HCT116 (cell line): ENCODE measurements at regions of chr13 and their contacts with region 1.

Region 1: GRCh38 chr13:51797664-51798488 is 6.1 kb downstream of the DHRS12 start:
- DNase-seq: peak; percentile 66
- ATAC-seq: peak; percentile 81
- H3K4me3 ChIP-seq: no peak overlapping the region
- H3K27ac ChIP-seq: no peak overlapping the region
- H3K4me1 ChIP-seq: peaks cover 25 to 30% of the 10 kb centered on the region in 2 experiments
- H3K27me3 ChIP-seq: no peaks in the 10 kb centered on the region
- CTCF ChIP-seq: peak in 2 of 3 experiments; percentile 64 to 70; a peak in 4 of 6 replicates
- POLR2A ChIP-seq: no peak
- RAD21 ChIP-seq: no peak

Region 2: GRCh38 chr13:50222569-50223332 is 1575.1 kb before region 1 on chr13:
- CTCF ChIA-PET with region 1: no interaction called
- POLR2A ChIA-PET with region 1: no interaction called
- RAD21 ChIA-PET with region 1: no interaction called
- intact Hi-C with region 1: no loop called
- DNase-seq: no peak
- ATAC-seq: no peak
- H3K4me3 ChIP-seq: no peak overlapping the region
- H3K27ac ChIP-seq: no peak overlapping the region
- H3K4me1 ChIP-seq: no peaks in the 10 kb centered on the region
- H3K27me3 ChIP-seq: no peaks in the 10 kb centered on the region
- CTCF ChIP-seq: no peak
- POLR2A ChIP-seq: no peak
- RAD21 ChIP-seq: no peak

Region 3: DNA sequence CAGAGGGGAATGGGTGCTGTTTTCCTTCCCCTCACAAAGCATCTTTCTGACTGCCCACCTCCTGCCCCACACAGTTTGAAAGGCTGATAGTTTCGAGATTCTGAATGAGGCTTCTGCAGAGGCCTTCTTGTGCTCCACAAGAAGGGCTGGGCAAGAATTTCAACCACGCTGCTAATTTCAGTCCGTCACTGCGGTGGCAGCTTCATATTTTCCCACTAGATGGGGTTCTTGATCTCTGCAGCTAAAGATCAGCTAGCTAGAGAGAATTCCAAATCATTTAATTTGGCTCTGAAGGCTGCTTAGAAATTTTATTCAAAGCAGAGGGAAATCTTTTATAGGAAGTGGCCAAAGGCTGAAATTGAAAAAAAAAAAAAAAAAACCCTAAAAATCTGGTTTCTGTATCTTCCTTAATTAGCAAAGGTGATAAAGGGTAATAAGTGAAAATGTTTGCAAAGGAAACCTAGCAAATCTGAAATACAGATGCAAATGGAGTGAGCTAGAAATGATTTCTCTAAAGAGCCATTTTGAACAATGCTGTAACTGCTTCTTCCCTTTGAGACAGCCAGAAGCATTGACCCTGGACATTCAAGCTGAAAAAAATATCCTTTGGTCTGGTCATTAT is 648.8 kb before region 1 on chr13:
- CTCF ChIA-PET with region 1: interaction called, 41 read pairs
- POLR2A ChIA-PET with region 1: interaction called, 3 read pairs
- RAD21 ChIA-PET with region 1: interaction called in 1 of 2 experiments, 3 read pairs
- intact Hi-C with region 1: loop called (anchors 1 kb)
- DNase-seq: peak; percentile 34
- ATAC-seq: peak; percentile 83
- H3K4me3 ChIP-seq: no peak overlapping the region
- H3K27ac ChIP-seq: no peak overlapping the region
- H3K4me1 ChIP-seq: no peaks in the 10 kb centered on the region
- H3K27me3 ChIP-seq: peaks cover 24% of the 10 kb centered on the region; the same call in 1 of the 2 replicates
- CTCF ChIP-seq: peak; percentile 58 to 65 (median 60); a peak in 5 of 6 replicates
- POLR2A ChIP-seq: no peak
- RAD21 ChIP-seq: peak; percentile 82

Region 4: DNA sequence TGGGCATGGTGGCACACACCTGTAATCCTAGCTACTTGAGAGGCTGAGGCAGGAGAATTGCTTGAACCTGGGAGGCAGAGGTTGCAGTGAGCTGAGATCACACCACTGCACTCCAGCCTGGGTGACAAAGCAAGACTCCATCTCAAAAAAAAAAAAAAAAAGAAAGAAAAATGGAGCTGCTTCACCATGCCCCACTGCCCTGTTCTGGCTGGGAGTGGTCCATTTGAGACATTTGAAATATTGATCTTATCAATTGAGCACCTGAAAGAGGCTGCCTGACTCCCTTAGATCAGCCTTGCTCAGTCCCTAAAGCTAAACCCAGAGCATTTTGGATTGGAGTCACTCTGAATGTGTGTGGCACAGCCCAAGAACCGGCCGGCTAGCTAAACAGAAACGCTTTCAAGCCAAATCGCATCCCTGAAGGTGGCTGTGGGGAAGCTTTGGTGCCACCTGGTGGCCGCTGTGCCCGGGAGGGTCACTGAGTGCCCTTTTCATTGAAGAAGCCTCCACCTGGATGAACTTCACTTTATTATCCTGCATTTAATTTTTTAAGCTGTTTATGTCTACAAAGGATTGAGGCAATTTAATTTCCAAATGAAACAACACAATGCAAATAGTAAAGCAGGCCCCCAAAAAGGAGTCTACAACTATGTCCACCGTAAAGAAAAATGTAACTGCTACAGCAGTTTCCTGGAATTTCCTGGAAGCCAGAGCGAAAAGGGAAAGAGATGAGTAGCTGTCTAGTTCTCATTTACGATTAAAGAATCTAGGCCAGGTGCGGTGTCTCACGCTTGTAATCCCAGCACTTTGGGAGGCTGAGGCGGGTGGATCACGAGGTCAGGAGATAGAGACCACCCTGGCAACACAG is 511.5 kb before region 1 on chr13:
- CTCF ChIA-PET with region 1: interaction called, 26 read pairs
- POLR2A ChIA-PET with region 1: no interaction called
- RAD21 ChIA-PET with region 1: interaction called, 8 read pairs
- intact Hi-C with region 1: loop called (anchors 2 kb)
- DNase-seq: peak; percentile 36
- ATAC-seq: peak; percentile 95
- H3K4me3 ChIP-seq: no peak overlapping the region
- H3K27ac ChIP-seq: no peak overlapping the region
- H3K4me1 ChIP-seq: no peaks in the 10 kb centered on the region
- H3K27me3 ChIP-seq: no peaks in the 10 kb centered on the region
- CTCF ChIP-seq: peak; percentile 74 to 96 (median 96); a peak in 5 of 6 replicates
- POLR2A ChIP-seq: no peak
- RAD21 ChIP-seq: peak; percentile 84

Region 5: GRCh38 chr13:51444922-51445321 is 353.0 kb before region 1 on chr13:
- CTCF ChIA-PET with region 1: interaction called, 18 read pairs
- POLR2A ChIA-PET with region 1: interaction called, 3 read pairs
- RAD21 ChIA-PET with region 1: interaction called, 4 to 5 read pairs
- intact Hi-C with region 1: no loop called
- DNase-seq: peak; percentile 15
- ATAC-seq: no peak
- H3K4me3 ChIP-seq: no peak overlapping the region
- H3K27ac ChIP-seq: no peak overlapping the region
- H3K4me1 ChIP-seq: no peaks in the 10 kb centered on the region
- H3K27me3 ChIP-seq: no peaks in the 10 kb centered on the region
- CTCF ChIP-seq: peak; percentile 8 to 42 (median 36); a peak in 2 of 6 replicates
- POLR2A ChIP-seq: no peak
- RAD21 ChIP-seq: peak; percentile 57

Region 6: GRCh38 chr13:51583875-51584730 is 213.8 kb before region 1 on chr13 and contains the start of gene WDFY2:
- CTCF ChIA-PET with region 1: interaction called, 5 read pairs
- POLR2A ChIA-PET with region 1: no interaction called
- RAD21 ChIA-PET with region 1: no interaction called
- intact Hi-C with region 1: loop called (anchors 5 kb)
- DNase-seq: peak; percentile 99
- ATAC-seq: peak; percentile 84
- H3K4me3 ChIP-seq: peak within 1 kb of the TSS; percentile 75 to 89
- H3K27ac ChIP-seq: peak within 1 kb of the TSS; percentile 83
- H3K4me1 ChIP-seq: peaks cover 14 to 18% of the 10 kb centered on the region in 2 experiments
- H3K27me3 ChIP-seq: no peaks in the 10 kb centered on the region
- CTCF ChIP-seq: no peak
- POLR2A ChIP-seq: peak; percentile 71
- RAD21 ChIP-seq: no peak
- total RNA-seq, gene WDFY2: 6.1 TPM